Left cardiac atrium (tissue), 4 donors: ENCODE measurements at regions of chr7 and their contacts with region 1.

Region 1: DNA sequence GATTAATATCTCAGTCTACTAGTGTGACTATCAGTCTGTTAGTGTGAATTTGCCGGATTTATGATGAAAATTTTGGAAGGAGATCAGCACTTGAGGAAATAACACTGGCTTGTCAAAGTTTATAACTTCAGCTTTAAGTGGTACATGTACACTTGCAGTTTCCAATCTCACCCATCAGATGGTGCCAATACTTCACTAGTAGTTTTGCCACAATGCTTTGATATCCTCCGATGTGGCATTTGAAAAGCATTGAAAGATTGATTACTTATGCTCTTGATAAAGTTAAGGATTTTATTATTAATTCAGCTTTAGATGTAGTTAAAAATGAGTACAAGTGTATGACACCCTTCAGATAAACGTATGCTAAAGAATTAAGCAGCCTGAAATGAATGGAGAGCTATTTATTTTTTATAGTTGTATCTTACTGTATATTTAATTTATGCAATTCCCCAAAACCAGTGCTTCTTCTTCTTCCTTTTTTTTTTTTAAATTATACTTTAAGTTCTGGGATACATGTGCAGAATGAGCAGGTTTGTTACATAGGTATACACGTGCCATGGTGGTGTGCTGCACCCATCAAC is 98.2 kb downstream of the ANLN start:
- DNase-seq: no peak
- ATAC-seq: peak; percentile 47 to 57

Region 2: GRCh38 chr7:36670585-36671431 is 183.0 kb after region 1 on chr7:
- intact Hi-C with region 1: loop called in 1 of 2 experiments (anchors 5 kb)
- DNase-seq: no peak
- ATAC-seq: peak; percentile 59 to 68

Region 3: GRCh38 chr7:36967387-36967786 is 479.5 kb after region 1 on chr7:
- intact Hi-C with region 1: loop called in 1 of 2 experiments (anchors 10 kb)
- DNase-seq: peak; percentile 63
- ATAC-seq: peak; percentile 93 to 96